SK-N-SH (cell line): ENCODE measurements at regions of chr17 and their contacts with region 1.

Region 1: GRCh38 chr17:1673041-1673785 is 11.5 kb downstream of the PRPF8 start:
- DNase-seq: no peak
- H3K4me3 ChIP-seq: no peak overlapping the region
- H3K27ac ChIP-seq: no peak overlapping the region
- H3K4me1 ChIP-seq: peaks cover 0 to 2% of the 10 kb centered on the region in 2 experiments; a peak in 1 of 4 replicates
- H3K27me3 ChIP-seq: no peaks in the 10 kb centered on the region
- CTCF ChIP-seq: no peak
- EP300 ChIP-seq: no peak
- RAD21 ChIP-seq: no peak

Region 2: GRCh38 chr17:1648963-1649843 is 24.0 kb before region 1 on chr17:
- CTCF ChIA-PET with region 1: interaction called, 17 read pairs
- POLR2A ChIA-PET with region 1: interaction called, 5 read pairs
- DNase-seq: peak; percentile 100
- H3K4me3 ChIP-seq: peak overlapping the region; percentile 57 to 74
- H3K27ac ChIP-seq: peak overlapping the region; percentile 64 to 86
- H3K4me1 ChIP-seq: peaks cover 9 to 16% of the 10 kb centered on the region in 2 experiments; a peak in 2 of 4 replicates
- H3K27me3 ChIP-seq: no peaks in the 10 kb centered on the region
- CTCF ChIP-seq: no peak
- EP300 ChIP-seq: 0 out of 4 replicates have a peak, but pooled peaks of 1 of the 2 experiments have one; percentile 21
- RAD21 ChIP-seq: no peak; the same call in 1 of the 2 replicates

Region 3: GRCh38 chr17:1658100-1658499 is 15.1 kb before region 1 on chr17:
- CTCF ChIA-PET with region 1: interaction called, 47 read pairs
- POLR2A ChIA-PET with region 1: interaction called, 5 read pairs
- DNase-seq: no peak
- H3K4me3 ChIP-seq: no peak overlapping the region
- H3K27ac ChIP-seq: no peak overlapping the region
- H3K4me1 ChIP-seq: no peaks in the 10 kb centered on the region
- H3K27me3 ChIP-seq: no peaks in the 10 kb centered on the region
- CTCF ChIP-seq: no peak
- EP300 ChIP-seq: no peak
- RAD21 ChIP-seq: no peak

Region 4: DNA sequence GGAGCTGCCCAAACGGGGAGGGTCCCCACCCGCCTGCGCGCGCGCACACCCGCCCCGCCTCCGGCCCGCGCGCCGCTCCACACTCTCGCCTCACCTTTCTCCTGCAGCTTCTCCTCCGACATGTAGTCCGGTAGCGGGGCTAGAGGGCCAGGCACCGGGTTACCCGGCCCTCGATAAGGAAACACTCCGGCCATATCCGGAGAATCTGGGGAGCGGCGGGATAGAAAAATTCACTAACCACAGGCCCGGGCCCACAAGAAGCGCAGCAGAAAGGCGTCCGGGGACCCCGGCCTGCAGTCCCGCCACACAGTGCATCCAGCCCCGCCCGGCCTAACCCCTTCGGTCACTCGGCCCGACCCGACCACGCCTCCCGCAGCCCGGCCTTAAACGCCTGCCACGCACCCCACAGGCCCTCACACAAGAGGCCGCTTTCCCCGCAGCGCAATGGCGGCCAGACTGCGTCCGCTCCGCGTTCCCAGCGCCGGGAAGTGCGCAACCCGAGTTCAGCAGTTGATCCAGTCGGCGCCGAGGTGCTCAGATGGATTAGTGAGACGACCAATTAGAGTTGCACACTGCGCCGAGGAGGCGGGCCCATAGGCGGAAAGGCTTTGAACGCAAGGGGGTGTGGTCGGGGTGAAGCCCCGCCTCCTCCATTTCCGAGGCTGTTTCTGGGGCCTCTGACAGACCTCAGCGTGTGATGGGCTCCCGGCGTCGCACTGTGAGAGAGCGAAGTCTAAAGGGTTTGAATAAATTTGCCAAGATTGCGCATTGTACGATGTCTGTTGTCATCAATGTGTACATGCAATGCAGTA is 11.4 kb after region 1 on chr17 and contains the start of gene PRPF8:
- CTCF ChIA-PET with region 1: interaction called, 56 read pairs
- POLR2A ChIA-PET with region 1: interaction called, 4 read pairs
- DNase-seq: peak; percentile 99
- H3K4me3 ChIP-seq: peak within 1 kb of the TSS; percentile 74 to 87
- H3K27ac ChIP-seq: peak within 1 kb of the TSS; percentile 85 to 88
- H3K4me1 ChIP-seq: peaks cover 4 to 9% of the 10 kb centered on the region in 2 experiments; a peak in 2 of 4 replicates
- H3K27me3 ChIP-seq: no peaks in the 10 kb centered on the region
- CTCF ChIP-seq: no peak
- EP300 ChIP-seq: no peak
- RAD21 ChIP-seq: no peak
- polyA plus RNA-seq, gene PRPF8: 123 and 149 TPM in 2 replicates

Region 5: DNA sequence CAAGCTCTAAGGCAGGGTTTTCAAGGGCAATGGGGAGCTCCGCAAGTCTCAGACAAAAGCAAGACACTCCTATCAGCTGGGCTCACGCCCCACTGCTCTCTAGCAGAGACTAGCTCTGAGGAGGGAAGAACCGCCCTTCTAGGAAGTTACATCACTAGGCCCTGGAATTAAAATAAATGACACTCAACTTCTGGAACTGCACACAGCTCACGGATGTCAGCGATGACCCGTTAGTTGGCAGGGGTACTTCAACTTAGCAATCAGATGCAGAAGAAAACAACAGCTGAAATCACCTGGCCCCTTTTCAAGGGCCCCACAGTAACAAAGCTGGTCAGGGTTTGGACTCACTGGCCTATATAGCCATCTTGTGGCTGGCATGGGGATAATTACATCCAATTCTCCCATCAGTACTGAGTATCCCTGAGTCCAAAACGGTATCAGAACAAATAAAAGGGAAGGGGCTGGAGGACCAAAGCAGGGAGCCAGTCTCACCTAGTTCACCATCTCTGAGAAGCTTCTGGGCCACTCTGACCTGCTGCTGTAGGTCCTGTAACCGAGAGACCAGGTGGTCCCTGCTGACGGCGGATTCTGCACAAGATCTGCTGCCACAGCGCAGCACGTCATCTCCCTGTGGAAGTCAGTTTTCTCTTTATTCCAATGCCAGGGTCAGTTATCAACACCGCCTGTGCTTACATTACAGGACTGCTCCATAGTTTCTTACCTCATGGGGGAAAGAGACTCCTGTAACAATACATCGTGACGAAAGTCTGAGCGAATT is 110.8 kb after region 1 on chr17:
- CTCF ChIA-PET with region 1: interaction called, 15 read pairs
- POLR2A ChIA-PET with region 1: no interaction called
- DNase-seq: peak; percentile 78
- H3K4me3 ChIP-seq: no peak overlapping the region; a peak in 1 of 4 replicates
- H3K27ac ChIP-seq: peak overlapping the region in 1 of 2 experiments; percentile 18; a peak in 2 of 4 replicates
- H3K4me1 ChIP-seq: peaks cover 14 to 26% of the 10 kb centered on the region in 2 experiments; a peak in 3 of 4 replicates
- H3K27me3 ChIP-seq: no peaks in the 10 kb centered on the region
- CTCF ChIP-seq: peak; percentile 77
- EP300 ChIP-seq: no peak
- RAD21 ChIP-seq: peak; percentile 85

Region 6: GRCh38 chr17:1796800-1797199 is 123.6 kb after region 1 on chr17:
- CTCF ChIA-PET with region 1: no interaction called
- POLR2A ChIA-PET with region 1: no interaction called
- DNase-seq: no peak
- H3K4me3 ChIP-seq: no peak overlapping the region
- H3K27ac ChIP-seq: no peak overlapping the region
- H3K4me1 ChIP-seq: peaks cover 0 to 22% of the 10 kb centered on the region in 2 experiments; a peak in 2 of 4 replicates
- H3K27me3 ChIP-seq: no peaks in the 10 kb centered on the region
- CTCF ChIP-seq: no peak
- EP300 ChIP-seq: no peak
- RAD21 ChIP-seq: no peak